Gastrocnemius medialis (tissue), 4 donors: ENCODE measurements at regions of chr12 and their contacts with region 1.

Region 1: GRCh38 chr12:57918147-57918546 is 23.2 kb upstream of the ATP23 start:
- DNase-seq: no peak
- ATAC-seq: no peak
- H3K4me3 ChIP-seq: no peak overlapping the region
- H3K27ac ChIP-seq: no peak overlapping the region
- H3K4me1 ChIP-seq: no peaks in the 10 kb centered on the region
- H3K27me3 ChIP-seq: peaks cover 0 to 2% (median 0%) of the 10 kb centered on the region in 3 donors
- CTCF ChIP-seq: no peak
- POLR2A ChIP-seq: no peak

Region 2: GRCh38 chr12:57803319-57803893 is 114.7 kb before region 1 on chr12:
- in situ Hi-C with region 1: loop called in 1 of 4 experiments (anchors 10 kb)
- intact Hi-C with region 1: no loop called
- DNase-seq: no peak
- ATAC-seq: peak in 1 of 2 donors; percentile 74
- H3K4me3 ChIP-seq: no peak overlapping the region
- H3K27ac ChIP-seq: peak overlapping the region in 3 of 4 donors; percentile 5 to 32 (median 9)
- H3K4me1 ChIP-seq: peaks cover 0 to 4% of the 10 kb centered on the region in 2 donors
- H3K27me3 ChIP-seq: no peaks in the 10 kb centered on the region
- CTCF ChIP-seq: peak; percentile 61 to 76 (median 74)
- POLR2A ChIP-seq: no peak

Region 3: DNA sequence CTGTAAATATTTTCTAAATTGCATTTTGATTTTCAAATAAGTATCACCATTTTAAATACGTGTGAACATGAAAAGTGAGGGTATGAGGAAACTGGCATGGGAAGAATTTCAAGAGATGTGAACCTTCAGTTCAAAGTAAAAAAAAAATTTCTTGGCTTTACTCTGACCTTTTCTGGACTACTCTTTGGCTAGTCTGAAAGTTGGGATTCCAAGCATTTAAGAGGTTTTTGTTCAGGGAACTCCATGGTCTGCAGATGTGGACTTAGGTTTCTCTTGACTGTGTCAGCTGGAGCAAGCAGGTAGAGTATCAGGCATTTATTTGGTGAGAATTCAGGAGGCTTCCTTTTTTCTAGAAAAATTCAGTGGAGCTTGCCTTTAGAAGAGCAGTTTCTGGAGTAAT is 690.6 kb after region 1 on chr12:
- in situ Hi-C with region 1: no loop called
- intact Hi-C with region 1: no loop called
- DNase-seq: no peak
- ATAC-seq: no peak
- H3K4me3 ChIP-seq: no peak overlapping the region
- H3K27ac ChIP-seq: no peak overlapping the region
- H3K4me1 ChIP-seq: no peaks in the 10 kb centered on the region
- H3K27me3 ChIP-seq: no peaks in the 10 kb centered on the region
- CTCF ChIP-seq: no peak
- POLR2A ChIP-seq: no peak